ENCODE measurements at regions of chr12 and their contacts with region 1.

Region 1: DNA sequence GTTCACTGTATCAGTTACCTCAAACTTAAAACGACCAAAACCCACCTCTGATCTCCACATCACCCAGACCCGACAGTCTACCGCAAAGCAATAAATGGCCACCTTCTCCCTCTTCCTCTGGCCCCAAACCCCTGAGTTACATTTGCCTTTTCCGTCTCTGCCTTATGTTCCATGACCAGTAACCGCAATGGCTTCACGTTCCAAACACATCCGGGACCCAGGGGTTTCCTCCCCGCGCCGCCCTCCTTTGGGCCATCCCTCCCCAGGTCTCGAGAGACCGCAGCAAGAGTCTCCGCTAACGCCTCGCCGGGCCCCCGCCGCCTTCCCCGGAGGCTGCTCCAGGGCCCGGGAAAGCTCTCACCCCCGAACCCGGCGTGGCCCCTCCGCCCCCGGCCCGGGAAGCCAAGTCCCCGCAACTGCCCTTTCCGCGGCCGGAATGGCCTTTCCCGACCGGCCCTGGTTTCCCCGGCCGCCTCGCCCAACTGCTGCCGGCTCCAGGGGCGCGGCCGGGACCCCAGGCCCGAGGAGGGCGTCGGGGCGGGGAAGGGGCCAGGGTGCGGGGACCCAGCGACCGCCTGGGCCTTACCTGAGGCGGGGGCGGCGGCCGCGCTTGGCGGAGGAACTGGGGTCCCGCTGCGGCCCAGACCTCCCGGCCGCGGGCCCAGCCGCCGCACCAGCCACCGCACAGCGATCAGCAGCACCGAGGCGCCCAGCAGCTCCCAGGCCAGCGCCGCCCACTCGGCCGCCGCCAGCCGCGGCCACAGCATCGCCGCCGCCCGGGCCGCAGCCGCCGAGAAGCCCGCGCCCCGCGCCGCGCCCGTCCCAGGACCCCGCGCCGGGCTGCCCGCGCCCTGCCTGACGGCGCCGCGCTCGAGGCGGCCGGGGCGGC is at the start of gene ANKLE2:
- DNase-seq: peak in 8 of 9 experiments; percentile 45 to 78 (median 66)
- ATAC-seq: peak; percentile 57
- H3K4me3 ChIP-seq: peak within 1 kb of the TSS; percentile 66 to 82
- H3K4me3 Mint-ChIP-seq: peak within 1 kb of the TSS; percentile 94
- H3K27ac ChIP-seq: peak within 1 kb of the TSS; percentile 71 to 75
- H3K27ac Mint-ChIP-seq: peak within 1 kb of the TSS; percentile 98
- H3K4me1 ChIP-seq: peaks cover 18% of the 10 kb centered on the region
- H3K4me1 Mint-ChIP-seq: peaks cover 35% of the 10 kb centered on the region
- H3K27me3 ChIP-seq: no peaks in the 10 kb centered on the region
- H3K27me3 Mint-ChIP-seq: no peaks in the 10 kb centered on the region
- CTCF ChIP-seq: no peak
- total RNA-seq, gene ANKLE2: 54.7 to 57.9 TPM

Region 2: GRCh38 chr12:132710422-132711168 is 50.7 kb before region 1 on chr12 and contains the start of gene PGAM5:
- CTCF ChIA-PET with region 1: no interaction called
- POLR2A ChIA-PET with region 1: no interaction called
- intact Hi-C with region 1: loop called (anchors 1 to 2 kb)
- DNase-seq: peak; percentile 81 to 98 (median 90)
- ATAC-seq: peak; percentile 97
- H3K4me3 ChIP-seq: peak within 1 kb of the TSS; percentile 68 to 69
- H3K4me3 Mint-ChIP-seq: peak within 1 kb of the TSS; percentile 87
- H3K27ac ChIP-seq: peak within 1 kb of the TSS; percentile 75 to 86
- H3K27ac Mint-ChIP-seq: peak within 1 kb of the TSS; percentile 94
- H3K4me1 ChIP-seq: peaks cover 21% of the 10 kb centered on the region
- H3K4me1 Mint-ChIP-seq: peaks cover 21% of the 10 kb centered on the region
- H3K27me3 ChIP-seq: no peaks in the 10 kb centered on the region
- H3K27me3 Mint-ChIP-seq: no peaks in the 10 kb centered on the region
- CTCF ChIP-seq: no peak
- total RNA-seq, gene PGAM5: 14.7 to 15.7 TPM

Region 3: DNA sequence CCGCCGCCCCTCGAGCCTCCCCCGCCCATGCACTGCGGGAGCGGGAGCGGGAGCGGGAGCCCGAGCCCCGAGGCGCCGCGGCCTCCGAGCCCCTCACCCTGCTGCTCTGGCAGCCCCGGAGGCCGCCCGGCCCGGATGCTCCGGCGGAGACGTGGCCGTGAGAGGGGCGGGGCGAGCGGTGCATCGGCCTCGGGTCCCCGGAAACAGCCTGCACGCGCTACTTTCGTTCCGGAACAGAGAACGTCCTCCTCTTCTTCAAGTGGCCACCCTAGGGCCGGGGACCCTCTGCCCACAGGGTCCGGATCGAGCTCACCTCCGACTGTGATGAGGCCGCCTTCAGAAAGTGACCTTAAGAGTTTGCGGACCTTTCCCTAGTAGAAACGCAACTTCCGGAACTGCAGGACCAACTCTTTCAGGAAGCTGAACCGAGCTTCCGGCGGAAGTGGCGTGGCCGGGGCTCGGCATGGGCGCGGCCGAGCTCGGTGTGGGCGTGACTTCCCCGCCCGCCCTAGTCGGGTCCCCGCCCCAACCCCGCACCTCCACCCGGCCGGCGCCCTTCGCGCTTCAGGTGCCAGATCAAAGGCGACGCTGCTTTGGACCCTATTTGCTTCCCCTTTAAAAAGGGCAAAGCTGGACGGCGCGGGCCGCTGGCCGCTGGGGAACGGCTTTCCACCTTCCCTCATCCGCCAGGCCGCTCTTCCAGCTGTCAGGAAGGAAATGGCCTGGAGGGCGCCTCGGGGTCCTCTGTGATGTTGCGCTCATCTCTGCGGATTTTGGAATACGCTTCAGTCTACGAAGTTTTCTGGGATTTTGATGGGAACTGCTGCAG is 67.6 kb after region 1 on chr12 and contains the start of gene GOLGA3:
- CTCF ChIA-PET with region 1: interaction called, 3 read pairs
- POLR2A ChIA-PET with region 1: interaction called, 3 read pairs
- intact Hi-C with region 1: loop called (anchors 2 to 5 kb)
- DNase-seq: peak; percentile 87 to 98 (median 96)
- ATAC-seq: peak; percentile 91
- H3K4me3 ChIP-seq: peak within 1 kb of the TSS; percentile 92
- H3K4me3 Mint-ChIP-seq: peak within 1 kb of the TSS; percentile 96
- H3K27ac ChIP-seq: peak within 1 kb of the TSS; percentile 100
- H3K27ac Mint-ChIP-seq: peak within 1 kb of the TSS; percentile 100
- H3K4me1 ChIP-seq: peaks cover 29% of the 10 kb centered on the region
- H3K4me1 Mint-ChIP-seq: peaks cover 56% of the 10 kb centered on the region
- H3K27me3 ChIP-seq: no peaks in the 10 kb centered on the region
- H3K27me3 Mint-ChIP-seq: no peaks in the 10 kb centered on the region
- CTCF ChIP-seq: no peak
- total RNA-seq, gene GOLGA3: 31.7 to 33.8 TPM

Region 4: DNA sequence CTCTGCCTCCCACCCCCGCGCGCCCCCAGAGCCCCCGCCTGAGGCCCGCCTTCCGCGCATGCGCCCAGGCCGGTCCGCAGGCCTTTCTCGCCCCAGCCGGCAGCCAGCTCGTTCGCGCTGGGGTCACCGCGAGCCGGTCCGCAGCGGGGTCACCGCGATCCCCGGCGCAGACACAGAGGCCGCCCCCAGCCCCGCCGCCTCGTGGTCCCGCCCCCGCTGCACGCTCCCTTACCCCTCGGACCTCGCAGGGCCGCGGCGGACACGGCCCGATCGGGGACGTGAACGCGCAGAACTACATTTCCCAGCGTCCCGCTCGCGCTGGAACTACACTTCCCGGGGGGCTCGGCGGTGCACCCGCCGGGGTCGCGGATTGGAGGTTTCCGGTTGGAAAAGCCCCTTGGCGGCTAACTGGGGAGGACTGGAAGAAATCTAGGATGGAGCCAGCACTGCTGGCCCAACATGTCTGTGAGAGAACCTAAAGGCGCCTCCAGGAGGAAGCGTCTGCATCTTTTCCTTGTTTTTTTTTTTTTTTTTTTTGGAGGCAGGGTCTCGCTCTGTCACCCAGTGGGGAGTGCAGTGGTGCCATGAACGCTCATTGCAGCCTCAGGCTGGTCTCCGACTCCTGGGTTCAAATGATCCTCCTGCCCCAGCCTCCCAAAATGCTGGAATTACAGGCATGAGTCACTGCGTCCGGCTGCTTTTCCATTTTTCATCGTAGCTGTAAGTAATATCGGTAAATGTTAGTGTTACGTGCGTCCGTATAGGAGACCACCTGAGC is 194.9 kb after region 1 on chr12 and contains the start of gene ZNF605:
- CTCF ChIA-PET with region 1: no interaction called
- POLR2A ChIA-PET with region 1: no interaction called
- intact Hi-C with region 1: loop called (anchors 2 to 5 kb)
- DNase-seq: peak; percentile 70 to 95 (median 86)
- ATAC-seq: peak; percentile 93
- H3K4me3 ChIP-seq: peak within 1 kb of the TSS; percentile 94 to 100
- H3K4me3 Mint-ChIP-seq: peak within 1 kb of the TSS; percentile 96
- H3K27ac ChIP-seq: peak within 1 kb of the TSS; percentile 78 to 86
- H3K27ac Mint-ChIP-seq: peak within 1 kb of the TSS; percentile 91
- H3K4me1 ChIP-seq: peaks cover 22% of the 10 kb centered on the region
- H3K4me1 Mint-ChIP-seq: peaks cover 32% of the 10 kb centered on the region
- H3K27me3 ChIP-seq: no peaks in the 10 kb centered on the region
- H3K27me3 Mint-ChIP-seq: no peaks in the 10 kb centered on the region
- CTCF ChIP-seq: no peak
- total RNA-seq, gene ZNF605: 5.0 TPM

Region 5: DNA sequence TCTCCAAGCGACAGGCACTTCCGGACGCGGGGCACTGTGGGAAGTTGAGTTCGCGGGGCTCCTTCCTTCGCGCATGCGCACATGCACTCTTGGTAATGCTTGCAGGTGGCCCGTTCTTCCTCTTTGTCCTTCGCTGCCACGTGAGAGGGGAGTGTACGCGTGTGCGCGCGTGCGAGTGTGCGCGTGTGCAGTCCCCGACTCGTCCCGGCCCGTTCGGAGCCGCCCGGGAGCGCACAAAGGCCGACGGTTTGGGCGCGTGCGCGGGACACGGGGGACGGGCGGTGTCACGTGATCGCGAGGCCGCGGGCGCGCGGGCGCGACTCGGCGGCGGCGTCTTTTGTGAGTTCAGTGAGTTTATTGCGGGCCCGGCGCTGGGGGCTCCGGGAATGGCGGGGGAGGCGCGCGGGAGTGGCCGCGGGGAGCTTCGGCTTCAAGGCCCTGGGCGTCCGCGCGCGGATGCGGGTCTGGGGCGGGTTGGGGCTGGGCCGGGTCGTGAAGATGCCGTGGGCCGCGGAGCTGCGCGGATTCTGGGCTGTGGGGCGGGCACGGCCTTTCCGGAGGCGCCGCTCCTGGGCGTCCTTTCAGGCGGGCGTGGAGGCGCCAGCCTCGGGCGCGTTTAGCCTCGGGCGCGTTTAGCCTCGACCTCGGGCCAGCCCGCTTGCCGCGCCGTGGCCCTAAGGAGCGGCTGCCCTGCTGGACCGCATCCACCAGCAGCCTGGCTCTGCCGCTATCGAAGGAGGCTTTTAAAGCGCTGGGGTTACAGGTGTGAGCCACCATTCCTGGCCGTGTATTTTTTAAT is 276.1 kb after region 1 on chr12 and contains the start of gene ZNF84:
- CTCF ChIA-PET with region 1: no interaction called
- POLR2A ChIA-PET with region 1: no interaction called
- intact Hi-C with region 1: loop called (anchors 2 to 5 kb)
- DNase-seq: peak; percentile 94 to 99 (median 96)
- ATAC-seq: peak; percentile 97
- H3K4me3 ChIP-seq: peak within 1 kb of the TSS; percentile 62 to 69
- H3K4me3 Mint-ChIP-seq: peak within 1 kb of the TSS; percentile 93
- H3K27ac ChIP-seq: peak within 1 kb of the TSS; percentile 78 to 89
- H3K27ac Mint-ChIP-seq: peak within 1 kb of the TSS; percentile 92
- H3K4me1 ChIP-seq: peaks cover 4% of the 10 kb centered on the region
- H3K4me1 Mint-ChIP-seq: peaks cover 20% of the 10 kb centered on the region
- H3K27me3 ChIP-seq: no peaks in the 10 kb centered on the region
- H3K27me3 Mint-ChIP-seq: no peaks in the 10 kb centered on the region
- CTCF ChIP-seq: no peak
- total RNA-seq, gene ZNF84: 26.8 to 27.2 TPM